Naive thymus-derived CD4-positive, alpha-beta T cell (primary cell): ENCODE measurements at regions of chr1 and their contacts with region 1.

Region 1: GRCh38 chr1:161165742-161166668 is at the start of gene PPOX:
- DNase-seq: peak; percentile 78 to 95 (median 93)
- ATAC-seq: peak; percentile 94
- H3K4me3 ChIP-seq: peak within 1 kb of the TSS; percentile 93
- H3K4me3 Mint-ChIP-seq: peak within 1 kb of the TSS; percentile 86 to 98 (median 94)
- H3K27ac ChIP-seq: peak within 1 kb of the TSS; percentile 86
- H3K27ac Mint-ChIP-seq: peak within 1 kb of the TSS; percentile 93 to 99 (median 99)
- H3K4me1 ChIP-seq: peaks cover 14 to 17% of the 10 kb centered on the region in 2 donors
- H3K4me1 Mint-ChIP-seq: peaks cover 38 to 77% (median 66%) of the 10 kb centered on the region in 7 donors
- H3K27me3 ChIP-seq: no peaks in the 10 kb centered on the region
- H3K27me3 Mint-ChIP-seq: no peaks in the 10 kb centered on the region
- total RNA-seq, gene PPOX: 39.7 to 76.2 (median 43.4) TPM

Region 2: DNA sequence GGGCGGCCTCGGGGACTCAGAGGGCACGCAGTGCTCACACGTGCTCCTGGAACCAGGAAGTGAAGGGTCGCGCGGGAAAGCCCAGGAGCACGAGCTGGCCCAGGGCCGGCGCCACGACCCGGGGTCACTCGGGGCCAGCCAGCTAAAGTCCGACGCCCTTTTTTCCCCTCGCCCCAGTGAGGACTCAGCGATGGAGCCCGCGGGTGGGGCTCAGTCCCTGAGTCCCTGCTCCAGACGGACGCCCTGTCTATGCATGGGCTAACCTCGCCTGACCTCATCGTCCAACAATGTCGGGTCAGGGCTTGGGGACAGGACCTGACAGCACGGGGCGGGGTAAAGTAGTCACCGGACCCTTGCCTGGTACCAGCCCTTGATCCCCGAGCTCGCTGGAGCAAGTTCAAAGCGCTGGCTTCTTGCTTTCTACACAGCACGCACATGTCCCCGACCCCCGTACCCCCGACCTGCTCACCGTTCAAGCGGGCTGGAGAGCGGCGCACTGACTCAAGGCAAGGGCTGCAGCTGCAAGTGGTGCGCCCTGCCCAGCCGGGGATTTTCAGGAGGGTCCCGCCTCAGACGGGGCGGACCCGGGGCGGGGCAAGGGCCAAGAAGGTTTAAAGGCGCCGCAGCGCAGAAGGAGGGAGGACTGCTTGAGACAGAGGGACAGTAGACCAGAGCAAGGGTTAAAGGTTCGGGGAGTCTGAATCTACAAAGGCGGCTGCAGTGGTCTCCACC is 1240.9 kb before region 1 on chr1 and contains the start of gene TAGLN2:
- CTCF ChIA-PET with region 1: no interaction called
- POLR2A ChIA-PET with region 1: no interaction called
- intact Hi-C with region 1: no loop called
- DNase-seq: peak; percentile 81 to 94 (median 86)
- ATAC-seq: peak; percentile 63
- H3K4me3 ChIP-seq: peak within 1 kb of the TSS; percentile 95
- H3K4me3 Mint-ChIP-seq: peak within 1 kb of the TSS; percentile 88 to 99 (median 94)
- H3K27ac ChIP-seq: peak within 1 kb of the TSS; percentile 95
- H3K27ac Mint-ChIP-seq: peak within 1 kb of the TSS; percentile 96 to 100 (median 99)
- H3K4me1 ChIP-seq: peaks cover 27 to 35% of the 10 kb centered on the region in 2 donors
- H3K4me1 Mint-ChIP-seq: peaks cover 34 to 54% (median 46%) of the 10 kb centered on the region in 7 donors
- H3K27me3 ChIP-seq: no peaks in the 10 kb centered on the region
- H3K27me3 Mint-ChIP-seq: peaks cover 0 to 11% (median 0%) of the 10 kb centered on the region in 5 donors
- total RNA-seq, gene TAGLN2: 116 to 450 (median 284) TPM

Region 3: GRCh38 chr1:161117759-161118581 is 48.0 kb before region 1 on chr1 and contains the starts of genes NIT1 and PFDN2:
- CTCF ChIA-PET with region 1: no interaction called
- POLR2A ChIA-PET with region 1: interaction called, 16 read pairs
- intact Hi-C with region 1: loop called in 1 of 2 experiments (anchors 1 kb)
- DNase-seq: peak; percentile 76 to 90 (median 85)
- ATAC-seq: peak; percentile 86
- H3K4me3 ChIP-seq: peak within 1 kb of the TSS; percentile 99
- H3K4me3 Mint-ChIP-seq: peak within 1 kb of the TSS; percentile 92 to 99 (median 95)
- H3K27ac ChIP-seq: peak within 1 kb of the TSS; percentile 92
- H3K27ac Mint-ChIP-seq: peak within 1 kb of the TSS; percentile 57 to 99 (median 93)
- H3K4me1 ChIP-seq: peaks cover 31 to 35% of the 10 kb centered on the region in 2 donors
- H3K4me1 Mint-ChIP-seq: peaks cover 44 to 82% (median 78%) of the 10 kb centered on the region in 7 donors
- H3K27me3 ChIP-seq: no peaks in the 10 kb centered on the region
- H3K27me3 Mint-ChIP-seq: no peaks in the 10 kb centered on the region
- total RNA-seq, gene NIT1: 23.3 to 49.6 (median 41.8) TPM
- total RNA-seq, gene PFDN2: 32.0 to 67.9 (median 34.0) TPM

Region 4: DNA sequence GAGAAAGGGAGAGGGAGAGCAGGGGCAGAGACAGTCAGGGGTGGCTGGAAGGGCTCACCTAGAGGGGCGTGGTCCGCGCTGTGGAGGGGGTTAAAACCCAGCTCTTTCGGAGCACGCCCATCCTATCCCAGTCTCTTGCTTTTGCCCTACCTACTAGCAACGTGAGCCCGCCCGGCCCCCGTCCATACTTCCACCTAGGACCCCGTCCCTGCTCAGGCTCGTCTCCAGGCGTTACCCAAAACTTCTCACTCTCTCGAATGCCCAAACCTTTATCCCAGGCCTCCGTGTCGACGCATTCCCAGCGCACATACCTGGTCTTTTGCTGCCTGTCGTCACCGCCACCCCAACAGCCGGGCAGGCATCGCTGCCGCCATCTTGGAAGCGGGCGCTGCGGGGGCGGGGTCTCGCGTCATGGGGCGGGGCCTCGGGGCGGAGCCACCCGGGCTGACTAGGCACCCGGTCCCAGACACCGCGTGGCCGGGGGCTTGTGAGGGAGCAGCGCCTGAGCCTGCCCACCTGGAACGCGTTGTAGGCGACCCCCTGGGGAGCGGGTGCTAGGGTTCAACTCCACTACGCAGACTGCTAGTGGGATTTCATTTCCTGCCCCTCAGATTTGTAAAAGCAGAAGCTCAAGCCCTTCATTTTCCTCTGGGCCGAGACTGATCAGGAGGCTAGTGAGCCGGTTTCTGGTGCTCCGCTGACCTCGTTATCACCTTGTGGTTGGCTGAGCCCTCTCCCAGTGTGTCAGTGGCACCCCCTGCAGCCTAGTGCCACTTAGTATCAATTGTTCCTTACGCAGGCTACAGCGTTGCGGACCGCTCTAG is 11.3 kb after region 1 on chr1 and contains the start of gene B4GALT3:
- CTCF ChIA-PET with region 1: interaction called, 32 read pairs
- POLR2A ChIA-PET with region 1: interaction called, 81 read pairs
- intact Hi-C with region 1: loop called (anchors 1 kb)
- DNase-seq: peak; percentile 87 to 99 (median 92)
- ATAC-seq: peak; percentile 96
- H3K4me3 ChIP-seq: peak within 1 kb of the TSS; percentile 93
- H3K4me3 Mint-ChIP-seq: peak within 1 kb of the TSS; percentile 94 to 100 (median 98)
- H3K27ac ChIP-seq: peak within 1 kb of the TSS; percentile 93
- H3K27ac Mint-ChIP-seq: peak within 1 kb of the TSS; percentile 94 to 100 (median 97)
- H3K4me1 ChIP-seq: peaks cover 36 to 39% of the 10 kb centered on the region in 2 donors
- H3K4me1 Mint-ChIP-seq: peaks cover 54 to 87% (median 74%) of the 10 kb centered on the region in 7 donors
- H3K27me3 ChIP-seq: no peaks in the 10 kb centered on the region
- H3K27me3 Mint-ChIP-seq: no peaks in the 10 kb centered on the region
- total RNA-seq, gene B4GALT3: 40.5 to 83.7 (median 54.3) TPM

Region 5: GRCh38 chr1:161201828-161202725 is 36.1 kb after region 1 on chr1 and contains the start of gene NDUFS2:
- CTCF ChIA-PET with region 1: interaction called, 19 read pairs
- POLR2A ChIA-PET with region 1: interaction called, 69 read pairs
- intact Hi-C with region 1: loop called (anchors 1 kb)
- DNase-seq: peak; percentile 71 to 98 (median 92)
- ATAC-seq: peak; percentile 99
- H3K4me3 ChIP-seq: peak within 1 kb of the TSS; percentile 78
- H3K4me3 Mint-ChIP-seq: peak within 1 kb of the TSS; percentile 90 to 98 (median 95)
- H3K27ac ChIP-seq: peak within 1 kb of the TSS; percentile 97
- H3K27ac Mint-ChIP-seq: peak within 1 kb of the TSS; percentile 96 to 99 (median 98)
- H3K4me1 ChIP-seq: peaks cover 35 to 60% of the 10 kb centered on the region in 2 donors
- H3K4me1 Mint-ChIP-seq: peaks cover 36 to 83% (median 66%) of the 10 kb centered on the region in 7 donors
- H3K27me3 ChIP-seq: no peaks in the 10 kb centered on the region
- H3K27me3 Mint-ChIP-seq: no peaks in the 10 kb centered on the region
- total RNA-seq, gene NDUFS2: 64.1 to 131 (median 85.3) TPM

Region 6: GRCh38 chr1:161305867-161306519 is 140.0 kb after region 1 on chr1:
- CTCF ChIA-PET with region 1: interaction called, 3 read pairs
- POLR2A ChIA-PET with region 1: interaction called, 5 read pairs
- intact Hi-C with region 1: loop called in 1 of 2 experiments (anchors 1 kb)
- DNase-seq: peak; percentile 67 to 94 (median 92)
- ATAC-seq: peak; percentile 99
- H3K4me3 ChIP-seq: peak overlapping the region; percentile 86
- H3K4me3 Mint-ChIP-seq: peak overlapping the region; percentile 93 to 100 (median 98)
- H3K27ac ChIP-seq: peak overlapping the region; percentile 78
- H3K27ac Mint-ChIP-seq: peak overlapping the region; percentile 91 to 98 (median 95)
- H3K4me1 ChIP-seq: peaks cover 16 to 19% of the 10 kb centered on the region in 2 donors
- H3K4me1 Mint-ChIP-seq: peaks cover 27 to 47% (median 41%) of the 10 kb centered on the region in 7 donors
- H3K27me3 ChIP-seq: no peaks in the 10 kb centered on the region
- H3K27me3 Mint-ChIP-seq: peaks cover 0 to 5% (median 0%) of the 10 kb centered on the region in 5 donors